ENCODE measurements at regions of chr14 and their contacts with region 1.

Region 1: GRCh38 chr14:50778721-50779483 is 52.1 kb downstream of the NIN start:
- DNase-seq: no peak
- H3K4me3 Mint-ChIP-seq: no peak overlapping the region
- H3K27ac Mint-ChIP-seq: peak overlapping the region; percentile 6
- H3K4me1 Mint-ChIP-seq: peaks cover 18% of the 10 kb centered on the region
- H3K27me3 Mint-ChIP-seq: no peaks in the 10 kb centered on the region

Region 2: GRCh38 chr14:50542941-50543418 is 235.9 kb before region 1 on chr14:
- intact Hi-C with region 1: loop called (anchors 2 kb)
- DNase-seq: no peak
- H3K4me3 Mint-ChIP-seq: no peak overlapping the region
- H3K27ac Mint-ChIP-seq: no peak overlapping the region
- H3K4me1 Mint-ChIP-seq: peaks cover 12% of the 10 kb centered on the region
- H3K27me3 Mint-ChIP-seq: peaks cover 11% of the 10 kb centered on the region

Region 3: DNA sequence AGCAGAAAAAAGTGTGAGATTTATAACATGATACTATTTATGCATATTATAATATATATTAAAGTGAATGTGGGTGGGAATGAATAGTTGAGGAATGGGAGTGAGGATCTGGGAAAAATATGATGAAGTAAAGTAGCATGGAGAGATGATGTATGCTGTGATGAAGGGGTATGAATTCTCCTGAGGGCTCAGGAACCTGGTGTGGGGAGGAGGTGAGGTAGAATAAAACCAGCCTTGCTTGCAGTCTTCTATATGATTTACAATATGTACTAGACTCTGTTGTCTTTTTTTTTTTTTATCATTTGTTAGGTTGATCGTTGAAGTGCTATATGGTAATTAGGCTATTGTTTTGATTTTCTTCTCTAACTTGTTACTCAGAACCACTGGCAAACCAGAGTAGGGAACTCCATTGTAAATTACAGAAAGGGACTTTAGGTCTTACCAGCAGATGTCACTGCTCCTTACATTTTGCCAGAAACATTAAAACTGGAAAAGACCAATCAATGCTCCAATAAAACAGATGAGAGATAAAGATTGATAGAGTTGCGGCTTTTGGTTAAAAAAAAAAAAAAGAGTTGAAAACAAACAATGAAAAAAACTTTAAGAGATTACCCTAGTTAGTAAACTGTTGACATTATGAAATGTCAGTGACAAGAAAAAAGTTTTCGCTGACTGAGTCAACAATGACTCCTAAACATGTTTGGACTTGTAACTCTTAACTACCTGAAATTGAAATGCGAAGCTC is 179.0 kb before region 1 on chr14:
- intact Hi-C with region 1: loop called (anchors 1 kb)
- DNase-seq: no peak
- H3K4me3 Mint-ChIP-seq: no peak overlapping the region
- H3K27ac Mint-ChIP-seq: no peak overlapping the region
- H3K4me1 Mint-ChIP-seq: peaks cover 3% of the 10 kb centered on the region
- H3K27me3 Mint-ChIP-seq: peaks cover 8% of the 10 kb centered on the region

Region 4: DNA sequence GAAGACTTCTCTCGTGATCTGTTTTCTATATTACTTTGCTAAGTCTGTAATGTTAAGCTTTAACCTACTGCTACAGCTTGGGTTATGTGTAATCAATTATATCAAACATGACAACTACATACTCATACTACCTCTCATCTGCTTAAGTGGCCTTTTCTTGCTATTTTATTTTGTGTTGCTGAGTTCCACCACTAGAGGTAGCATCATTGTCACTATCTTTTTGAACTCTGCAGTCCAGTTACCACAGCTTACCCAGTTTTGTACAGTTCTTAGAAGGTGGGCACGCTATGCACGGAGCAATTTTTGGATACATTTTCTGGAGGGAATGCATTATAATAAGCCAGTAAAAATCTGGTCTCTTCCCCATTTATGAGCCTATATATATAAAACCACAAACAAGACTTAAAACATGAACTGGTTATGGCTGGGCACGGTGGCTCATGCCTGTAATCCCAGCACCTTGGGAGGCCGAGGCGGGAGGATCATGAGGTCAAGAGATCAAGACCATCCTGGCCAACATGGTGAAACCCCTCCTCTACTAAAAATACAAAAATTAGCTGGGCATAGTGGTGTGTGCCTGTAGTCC is 159.3 kb before region 1 on chr14:
- intact Hi-C with region 1: loop called (anchors 2 kb)
- DNase-seq: no peak
- H3K4me3 Mint-ChIP-seq: no peak overlapping the region
- H3K27ac Mint-ChIP-seq: no peak overlapping the region
- H3K4me1 Mint-ChIP-seq: peaks cover 2% of the 10 kb centered on the region
- H3K27me3 Mint-ChIP-seq: peaks cover 2% of the 10 kb centered on the region

Region 5: DNA sequence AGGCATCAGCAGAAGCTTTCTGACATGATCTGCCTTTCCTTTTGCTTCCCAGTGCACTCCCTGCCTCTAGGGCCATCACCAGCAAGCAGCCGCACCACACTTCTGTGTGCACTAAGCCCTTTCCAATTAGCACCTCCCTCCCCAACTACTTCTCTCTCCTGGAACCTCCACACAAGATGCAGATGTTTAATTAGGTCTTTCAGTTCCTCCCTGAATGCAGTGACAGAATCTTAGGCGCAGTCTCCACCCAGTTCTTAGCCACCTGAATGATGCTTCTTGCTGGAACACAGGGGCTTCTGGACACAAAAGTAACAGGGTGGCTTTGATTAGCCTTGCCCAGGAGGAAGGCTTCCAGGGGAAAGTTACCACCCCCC is 19.1 kb after region 1 on chr14:
- intact Hi-C with region 1: no loop called
- DNase-seq: no peak
- H3K4me3 Mint-ChIP-seq: no peak overlapping the region
- H3K27ac Mint-ChIP-seq: no peak overlapping the region
- H3K4me1 Mint-ChIP-seq: peaks cover 6% of the 10 kb centered on the region
- H3K27me3 Mint-ChIP-seq: no peaks in the 10 kb centered on the region

Measured in activated T-helper 2 cell treated with anti-CD3 and anti-CD28 coated beads, Interferon-gamma antibody, Interleukin-2, Interleukin-4, amounts not matched to agents 10 μg/mL and 5 μg/mL and 100 μg/mL, durations not matched to agents 14 hours and 24 hours and 36 hours (primary cell).